Activated T-helper 1 cell treated with anti-CD3 and anti-CD28 coated beads, Interleukin-12 subunit alpha, Interleukin-12 subunit beta, Interleukin-2, Interleukin-4 antibody, amounts not matched to agents 30 ng/mL and 10 ng/mL and 1 ng/mL, durations not matched to agents 14 hours and 24 hours and 36 hours (primary cell): ENCODE measurements at regions of chr5 and their contacts with region 1.

Region 1: GRCh38 chr5:141889282-141889871 is 11.2 kb upstream of the PCDH1 start:
- DNase-seq: no peak
- H3K4me3 Mint-ChIP-seq: no peak overlapping the region
- H3K27ac Mint-ChIP-seq: no peak overlapping the region
- H3K4me1 Mint-ChIP-seq: no peaks in the 10 kb centered on the region
- H3K27me3 Mint-ChIP-seq: peaks cover 40% of the 10 kb centered on the region

Region 2: GRCh38 chr5:141910271-141910673 is 20.9 kb after region 1 on chr5:
- intact Hi-C with region 1: no loop called
- DNase-seq: no peak
- H3K4me3 Mint-ChIP-seq: no peak overlapping the region
- H3K27ac Mint-ChIP-seq: no peak overlapping the region
- H3K4me1 Mint-ChIP-seq: peaks cover 7% of the 10 kb centered on the region
- H3K27me3 Mint-ChIP-seq: peaks cover 30% of the 10 kb centered on the region

Region 3: GRCh38 chr5:141934099-141934844 is 44.9 kb after region 1 on chr5:
- intact Hi-C with region 1: no loop called
- DNase-seq: no peak
- H3K4me3 Mint-ChIP-seq: no peak overlapping the region
- H3K27ac Mint-ChIP-seq: no peak overlapping the region
- H3K4me1 Mint-ChIP-seq: no peaks in the 10 kb centered on the region
- H3K27me3 Mint-ChIP-seq: no peaks in the 10 kb centered on the region

Region 4: GRCh38 chr5:141960449-141961202 is 71.2 kb after region 1 on chr5:
- intact Hi-C with region 1: loop called (anchors 1 kb)
- DNase-seq: peak; percentile 82
- H3K4me3 Mint-ChIP-seq: peak overlapping the region; percentile 24
- H3K27ac Mint-ChIP-seq: peak overlapping the region; percentile 76
- H3K4me1 Mint-ChIP-seq: peaks cover 42% of the 10 kb centered on the region
- H3K27me3 Mint-ChIP-seq: no peaks in the 10 kb centered on the region

Region 5: GRCh38 chr5:142186857-142187594 is 297.6 kb after region 1 on chr5:
- intact Hi-C with region 1: no loop called
- DNase-seq: no peak
- H3K4me3 Mint-ChIP-seq: no peak overlapping the region
- H3K27ac Mint-ChIP-seq: no peak overlapping the region
- H3K4me1 Mint-ChIP-seq: no peaks in the 10 kb centered on the region
- H3K27me3 Mint-ChIP-seq: peaks cover 10% of the 10 kb centered on the region